Heart left ventricle (tissue), 16 donors: ENCODE measurements at regions of chr3 and their contacts with region 1.

Region 1: GRCh38 chr3:174440741-174441587 is 418.2 kb upstream of the NAALADL2 start:
- DNase-seq: peak; percentile 85 to 90 (median 89)
- ATAC-seq: peak; percentile 68 to 93 (median 84)
- H3K4me3 ChIP-seq: peak overlapping the region; percentile 65 to 84 (median 74)
- H3K27ac ChIP-seq: peak overlapping the region; percentile 88 to 98 (median 96)
- H3K4me1 ChIP-seq: peaks cover 0 to 29% (median 9%) of the 10 kb centered on the region in 12 donors
- H3K27me3 ChIP-seq: no peaks in the 10 kb centered on the region
- CTCF ChIP-seq: peak in 2 of 12 donors; percentile 25 to 30
- POLR2A ChIP-seq: no peak

Region 2: DNA sequence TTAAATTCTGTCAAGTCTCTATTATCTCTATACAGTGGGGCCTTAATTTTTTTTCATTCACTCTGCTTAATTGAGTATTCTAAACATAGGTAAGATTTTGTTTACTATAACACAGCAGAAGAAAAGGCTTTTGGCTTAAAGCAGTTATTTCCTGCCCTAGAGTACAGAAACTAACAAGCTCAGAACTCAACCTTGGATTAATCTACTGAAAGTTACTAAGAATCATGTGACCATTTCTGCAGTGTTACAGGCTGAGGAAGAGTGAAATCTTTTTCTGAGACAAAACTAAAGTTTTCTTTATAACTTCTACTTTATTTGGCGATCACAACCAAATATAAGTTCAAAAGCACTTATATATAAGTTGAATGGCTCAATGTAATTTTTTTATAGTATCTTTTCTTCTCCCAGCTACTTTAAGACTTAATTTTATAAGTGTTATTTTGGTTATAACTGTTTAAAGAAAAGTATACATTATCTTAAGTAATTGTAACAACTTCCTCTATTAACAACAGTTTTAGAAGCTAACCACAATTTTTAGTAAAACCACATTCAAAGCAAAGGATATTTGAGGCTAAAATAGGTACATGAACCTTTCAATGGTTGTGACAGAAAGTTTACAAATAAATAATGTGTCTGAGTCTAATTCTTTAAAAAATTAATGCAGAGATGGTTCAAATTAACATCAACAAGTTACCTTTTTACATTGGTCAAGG is 177.6 kb after region 1 on chr3:
- intact Hi-C with region 1: loop called in 1 of 10 experiments (anchors 5 kb)
- DNase-seq: no peak
- ATAC-seq: no peak
- H3K4me3 ChIP-seq: no peak overlapping the region
- H3K27ac ChIP-seq: no peak overlapping the region
- H3K4me1 ChIP-seq: peaks cover 0 to 21% (median 1%) of the 10 kb centered on the region in 12 donors
- H3K27me3 ChIP-seq: no peaks in the 10 kb centered on the region
- CTCF ChIP-seq: no peak
- POLR2A ChIP-seq: no peak